H1 (cell line): ENCODE measurements at regions of chr3 and their contacts with region 1.

Region 1: DNA sequence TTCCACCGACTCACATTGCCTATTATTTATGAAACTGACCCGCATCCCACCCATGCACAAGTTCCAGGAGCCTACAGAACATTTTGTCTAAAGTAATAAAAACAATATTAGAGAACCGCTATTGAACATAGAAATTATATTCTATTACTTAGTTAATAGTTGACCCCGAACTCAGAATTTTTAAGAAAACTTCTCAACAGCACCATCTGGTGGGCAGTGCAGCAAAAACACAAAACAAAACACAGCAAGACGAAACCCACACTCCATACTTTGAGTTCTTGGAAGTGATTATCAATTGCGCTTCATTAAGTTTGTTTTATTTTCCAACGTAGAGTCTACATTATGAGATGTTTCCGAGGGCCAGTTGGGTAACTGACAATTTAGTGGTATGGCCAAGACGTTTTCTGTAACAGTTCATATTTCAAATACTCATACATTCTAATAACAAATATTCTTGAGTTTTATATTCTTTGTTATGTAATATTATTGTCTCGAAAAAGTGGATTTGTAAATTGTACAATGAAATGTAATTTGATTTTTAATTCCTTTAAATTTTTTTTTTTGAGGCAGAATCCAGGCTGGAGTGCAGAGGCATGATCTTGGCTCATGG is 24.0 kb upstream of the C3orf70 start:
- DNase-seq: peak in 1 of 2 experiments; percentile 71
- H3K4me3 ChIP-seq: no peak overlapping the region
- H3K27ac ChIP-seq: no peak overlapping the region
- H3K4me1 ChIP-seq: peaks cover 3 to 16% (median 7%) of the 10 kb centered on the region in 4 experiments; a peak in 6 of 7 replicates
- H3K27me3 ChIP-seq: no peaks in the 10 kb centered on the region
- CTCF ChIP-seq: peak in 2 of 3 experiments; percentile 58 to 68; a peak in 3 of 4 replicates
- EP300 ChIP-seq: no peak
- POLR2A ChIP-seq: no peak
- RAD21 ChIP-seq: peak; percentile 68

Region 2: GRCh38 chr3:185049710-185050109 is 127.1 kb before region 1 on chr3:
- CTCF ChIA-PET with region 1: interaction called, 10 read pairs
- POLR2A ChIA-PET with region 1: no interaction called
- DNase-seq: no peak
- H3K4me3 ChIP-seq: no peak overlapping the region
- H3K27ac ChIP-seq: no peak overlapping the region
- H3K4me1 ChIP-seq: peaks cover 0 to 4% (median 1%) of the 10 kb centered on the region in 4 experiments; a peak in 2 of 7 replicates
- H3K27me3 ChIP-seq: no peaks in the 10 kb centered on the region
- CTCF ChIP-seq: peak in 2 of 3 experiments; percentile 54 to 57; a peak in 3 of 4 replicates
- EP300 ChIP-seq: no peak
- POLR2A ChIP-seq: no peak
- RAD21 ChIP-seq: peak; percentile 44 to 65

Region 3: GRCh38 chr3:185076219-185076618 is 100.6 kb before region 1 on chr3:
- CTCF ChIA-PET with region 1: interaction called, 49 read pairs
- POLR2A ChIA-PET with region 1: no interaction called
- DNase-seq: no peak
- H3K4me3 ChIP-seq: no peak overlapping the region
- H3K27ac ChIP-seq: no peak overlapping the region
- H3K4me1 ChIP-seq: no peaks in the 10 kb centered on the region; a peak in 1 of 7 replicates
- H3K27me3 ChIP-seq: no peaks in the 10 kb centered on the region; a peak in 2 of 7 replicates
- CTCF ChIP-seq: no peak
- EP300 ChIP-seq: no peak
- POLR2A ChIP-seq: no peak
- RAD21 ChIP-seq: no peak

Region 4: DNA sequence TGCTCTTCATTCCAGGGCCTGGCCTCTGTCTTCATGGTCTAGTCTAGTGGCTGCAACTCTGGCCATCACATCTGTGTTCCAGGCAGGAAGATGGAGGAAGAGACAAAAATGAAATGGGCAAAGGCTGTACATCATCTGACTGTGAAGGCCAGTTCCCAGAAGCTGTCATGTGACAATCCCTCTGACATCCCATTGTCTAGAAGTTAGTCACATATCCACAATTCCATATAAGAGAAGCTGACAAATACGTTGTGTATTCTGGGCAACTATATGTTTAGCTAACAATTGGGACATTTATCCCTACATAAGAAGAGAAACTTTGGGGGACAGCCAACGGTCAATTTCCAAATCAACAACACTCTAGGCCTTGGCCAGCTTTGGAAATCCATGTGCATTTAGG is 10.5 kb after region 1 on chr3:
- CTCF ChIA-PET with region 1: interaction called, 24 read pairs
- POLR2A ChIA-PET with region 1: no interaction called
- DNase-seq: no peak
- H3K4me3 ChIP-seq: no peak overlapping the region
- H3K27ac ChIP-seq: no peak overlapping the region
- H3K4me1 ChIP-seq: no peaks in the 10 kb centered on the region
- H3K27me3 ChIP-seq: no peaks in the 10 kb centered on the region
- CTCF ChIP-seq: no peak
- EP300 ChIP-seq: no peak
- POLR2A ChIP-seq: no peak
- RAD21 ChIP-seq: no peak

Region 5: DNA sequence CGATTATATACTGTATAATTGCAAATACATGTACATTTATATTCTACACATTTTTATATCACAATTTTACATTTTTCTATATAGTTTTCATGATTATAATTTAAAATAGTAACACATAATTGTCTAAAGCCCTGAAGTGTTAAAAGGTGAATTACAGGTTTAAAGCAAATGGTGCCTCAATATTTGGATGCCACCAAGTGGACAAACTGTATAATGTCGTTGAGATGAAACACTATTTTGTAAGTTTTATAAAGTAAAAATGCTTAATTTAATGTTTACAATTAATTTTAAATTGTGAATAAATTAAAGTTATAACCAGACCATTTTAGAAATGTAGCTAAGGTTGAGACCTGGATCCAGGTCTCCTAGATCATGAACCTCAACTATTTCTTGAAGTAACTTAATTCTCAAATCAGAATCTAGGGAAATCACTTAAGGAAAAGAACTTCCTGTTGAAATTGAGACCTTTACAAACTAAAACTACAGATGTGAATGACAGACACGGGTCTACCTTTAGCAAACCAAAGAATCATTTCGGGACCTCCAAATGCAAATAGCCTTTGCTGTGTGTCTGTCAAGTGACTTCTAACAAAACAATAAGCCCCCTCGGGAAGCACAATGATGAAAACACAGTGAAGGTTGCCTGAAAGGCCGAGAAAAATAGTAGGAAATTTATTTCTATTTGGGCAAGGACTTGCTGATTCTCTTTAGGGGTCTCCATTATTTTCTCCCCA is 39.2 kb after region 1 on chr3:
- CTCF ChIA-PET with region 1: interaction called, 11 read pairs
- POLR2A ChIA-PET with region 1: no interaction called
- DNase-seq: no peak
- H3K4me3 ChIP-seq: peak overlapping the region in 2 of 4 experiments; percentile 5 to 41; a peak in 3 of 8 replicates
- H3K27ac ChIP-seq: no peak overlapping the region
- H3K4me1 ChIP-seq: peaks cover 0 to 6% (median 2%) of the 10 kb centered on the region in 4 experiments; a peak in 3 of 7 replicates
- H3K27me3 ChIP-seq: no peaks in the 10 kb centered on the region
- CTCF ChIP-seq: peak in 1 of 3 experiments; percentile 15; a peak in 2 of 4 replicates
- EP300 ChIP-seq: no peak
- POLR2A ChIP-seq: no peak
- RAD21 ChIP-seq: peak; percentile 55 to 59